Activated B cell treated with CpG ODN at 0.5 μM for 24 hours (primary cell): ENCODE measurements at regions of chr2 and their contacts with region 1.

Region 1: DNA sequence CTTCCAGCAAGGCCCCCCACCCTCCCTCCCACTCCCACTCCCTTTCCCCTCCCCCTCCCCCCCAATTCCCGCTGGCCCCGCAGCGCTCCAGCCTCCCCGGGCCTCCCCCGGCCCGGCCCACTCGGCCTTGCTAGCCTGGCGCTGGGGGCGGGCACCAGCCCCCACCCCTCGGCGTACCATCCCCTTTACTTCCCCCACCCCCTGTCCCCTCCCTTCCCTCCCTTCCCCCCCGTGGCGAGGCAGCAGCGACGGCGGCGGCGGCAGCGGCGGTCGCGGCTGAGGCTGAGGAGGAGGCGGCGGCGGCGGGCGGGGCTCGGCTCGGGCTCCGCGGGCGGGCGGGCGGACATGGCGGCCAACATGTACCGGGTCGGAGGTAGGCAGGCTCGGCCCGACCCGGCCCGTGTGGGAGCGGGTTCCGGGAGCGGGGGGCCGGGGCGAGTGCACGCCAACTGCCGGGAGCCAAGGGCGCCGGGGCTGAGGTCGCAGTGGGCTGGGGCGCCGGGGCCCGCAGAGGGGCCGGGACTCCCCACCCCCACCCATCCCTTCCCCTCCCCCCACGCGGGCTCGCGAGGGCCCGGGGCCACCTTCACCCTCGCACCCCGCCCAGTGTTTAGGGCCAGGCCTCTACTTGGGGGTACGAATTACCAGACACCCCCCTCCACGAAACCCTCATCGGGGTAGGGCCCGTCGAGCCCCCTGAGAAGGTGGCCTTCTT is at the start of gene MTA3:
- DNase-seq: peak; percentile 62
- ATAC-seq: peak; percentile 69
- H3K4me3 Mint-ChIP-seq: peak within 1 kb of the TSS; percentile 87
- H3K27ac Mint-ChIP-seq: peak within 1 kb of the TSS; percentile 70
- H3K4me1 Mint-ChIP-seq: peaks cover 30% of the 10 kb centered on the region
- H3K27me3 Mint-ChIP-seq: no peaks in the 10 kb centered on the region
- CTCF ChIP-seq: no peak
- total RNA-seq, gene MTA3: 26.2 and 26.8 TPM in 2 replicates

Region 2: GRCh38 chr2:42256505-42256904 is 312.1 kb before region 1 on chr2:
- CTCF ChIA-PET with region 1: no interaction called
- POLR2A ChIA-PET with region 1: no interaction called
- intact Hi-C with region 1: no loop called
- DNase-seq: no peak
- ATAC-seq: peak; percentile 68
- H3K4me3 Mint-ChIP-seq: peak overlapping the region; percentile 4
- H3K27ac Mint-ChIP-seq: peak overlapping the region; percentile 32
- H3K4me1 Mint-ChIP-seq: peaks cover 45% of the 10 kb centered on the region
- H3K27me3 Mint-ChIP-seq: no peaks in the 10 kb centered on the region
- CTCF ChIP-seq: no peak

Region 3: GRCh38 chr2:42510608-42511243 is 57.8 kb before region 1 on chr2:
- CTCF ChIA-PET with region 1: no interaction called
- POLR2A ChIA-PET with region 1: no interaction called
- intact Hi-C with region 1: no loop called
- DNase-seq: no peak
- ATAC-seq: no peak
- H3K4me3 Mint-ChIP-seq: no peak overlapping the region
- H3K27ac Mint-ChIP-seq: no peak overlapping the region
- H3K4me1 Mint-ChIP-seq: peaks cover 3% of the 10 kb centered on the region
- H3K27me3 Mint-ChIP-seq: peaks cover 3% of the 10 kb centered on the region
- CTCF ChIP-seq: no peak

Region 4: DNA sequence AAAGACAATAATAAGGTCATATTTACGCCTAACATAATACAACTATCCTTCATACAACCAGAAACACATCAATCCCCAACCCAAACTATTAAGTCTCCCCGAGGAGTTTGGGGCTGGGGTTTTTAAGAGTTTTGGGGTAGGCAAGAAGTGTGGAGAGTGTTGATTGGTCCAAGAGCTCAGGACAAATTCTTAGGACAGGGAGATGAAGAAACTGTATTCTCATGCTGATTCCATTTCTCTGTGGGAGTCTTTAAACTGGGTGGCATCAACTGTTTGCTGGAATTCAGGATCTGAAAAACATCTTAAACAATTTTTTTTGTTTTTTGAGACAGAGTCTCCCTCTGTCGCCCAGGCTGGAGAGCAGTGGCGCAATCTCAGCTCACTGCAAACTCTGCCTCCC is 25.7 kb before region 1 on chr2:
- CTCF ChIA-PET with region 1: no interaction called
- POLR2A ChIA-PET with region 1: no interaction called
- intact Hi-C with region 1: no loop called
- DNase-seq: no peak
- ATAC-seq: no peak
- H3K4me3 Mint-ChIP-seq: no peak overlapping the region
- H3K27ac Mint-ChIP-seq: no peak overlapping the region
- H3K4me1 Mint-ChIP-seq: peaks cover 8% of the 10 kb centered on the region
- H3K27me3 Mint-ChIP-seq: no peaks in the 10 kb centered on the region
- CTCF ChIP-seq: no peak

Region 5: GRCh38 chr2:42598656-42599055 is 30.1 kb after region 1 on chr2:
- CTCF ChIA-PET with region 1: no interaction called
- POLR2A ChIA-PET with region 1: interaction called, 9 read pairs
- intact Hi-C with region 1: loop called (anchors 1 kb)
- DNase-seq: no peak
- ATAC-seq: no peak
- H3K4me3 Mint-ChIP-seq: no peak overlapping the region
- H3K27ac Mint-ChIP-seq: no peak overlapping the region
- H3K4me1 Mint-ChIP-seq: peaks cover 30% of the 10 kb centered on the region
- H3K27me3 Mint-ChIP-seq: no peaks in the 10 kb centered on the region
- CTCF ChIP-seq: no peak

Region 6: GRCh38 chr2:43595603-43596412 is 1027.2 kb after region 1 on chr2 and contains the start of gene THADA:
- CTCF ChIA-PET with region 1: no interaction called
- POLR2A ChIA-PET with region 1: no interaction called
- intact Hi-C with region 1: loop called (anchors 1 kb)
- DNase-seq: peak; percentile 86
- ATAC-seq: peak; percentile 98
- H3K4me3 Mint-ChIP-seq: peak within 1 kb of the TSS; percentile 97
- H3K27ac Mint-ChIP-seq: peak within 1 kb of the TSS; percentile 95
- H3K4me1 Mint-ChIP-seq: peaks cover 27% of the 10 kb centered on the region
- H3K27me3 Mint-ChIP-seq: no peaks in the 10 kb centered on the region
- CTCF ChIP-seq: no peak
- total RNA-seq, gene THADA: 43.2 and 51.4 TPM in 2 replicates